PC-9 (cell line): ENCODE measurements at regions of chr4 and their contacts with region 1.

Region 1: GRCh38 chr4:2468445-2469192 is at the start of gene RNF4:
- DNase-seq: peak; percentile 91 to 93
- H3K4me3 ChIP-seq: peak within 1 kb of the TSS; percentile 94
- H3K27ac ChIP-seq: peak within 1 kb of the TSS; percentile 57
- H3K4me1 ChIP-seq: peaks cover 5% of the 10 kb centered on the region
- H3K27me3 ChIP-seq: no peaks in the 10 kb centered on the region
- CTCF ChIP-seq: no peak
- total RNA-seq, gene RNF4: 63.5 and 95.4 TPM in 2 replicates

Region 2: GRCh38 chr4:1883583-1883982 is 585.0 kb before region 1 on chr4:
- CTCF ChIA-PET with region 1: interaction called, 10 read pairs
- POLR2A ChIA-PET with region 1: no interaction called
- intact Hi-C with region 1: no loop called
- DNase-seq: no peak
- H3K4me3 ChIP-seq: no peak overlapping the region
- H3K27ac ChIP-seq: no peak overlapping the region
- H3K4me1 ChIP-seq: no peaks in the 10 kb centered on the region
- H3K27me3 ChIP-seq: no peaks in the 10 kb centered on the region
- CTCF ChIP-seq: no peak

Region 3: GRCh38 chr4:2262143-2262943 is 206.3 kb before region 1 on chr4:
- CTCF ChIA-PET with region 1: no interaction called
- POLR2A ChIA-PET with region 1: no interaction called
- intact Hi-C with region 1: loop called (anchors 5 kb)
- DNase-seq: peak; percentile 95 to 99
- H3K4me3 ChIP-seq: peak overlapping the region; percentile 62
- H3K27ac ChIP-seq: no peak overlapping the region
- H3K4me1 ChIP-seq: peaks cover 9% of the 10 kb centered on the region; the same call in 1 of the 2 replicates
- H3K27me3 ChIP-seq: 0 out of 2 replicates have a peak, but pooled peaks cover 6% of the 10 kb centered on the region
- CTCF ChIP-seq: no peak

Region 4: DNA sequence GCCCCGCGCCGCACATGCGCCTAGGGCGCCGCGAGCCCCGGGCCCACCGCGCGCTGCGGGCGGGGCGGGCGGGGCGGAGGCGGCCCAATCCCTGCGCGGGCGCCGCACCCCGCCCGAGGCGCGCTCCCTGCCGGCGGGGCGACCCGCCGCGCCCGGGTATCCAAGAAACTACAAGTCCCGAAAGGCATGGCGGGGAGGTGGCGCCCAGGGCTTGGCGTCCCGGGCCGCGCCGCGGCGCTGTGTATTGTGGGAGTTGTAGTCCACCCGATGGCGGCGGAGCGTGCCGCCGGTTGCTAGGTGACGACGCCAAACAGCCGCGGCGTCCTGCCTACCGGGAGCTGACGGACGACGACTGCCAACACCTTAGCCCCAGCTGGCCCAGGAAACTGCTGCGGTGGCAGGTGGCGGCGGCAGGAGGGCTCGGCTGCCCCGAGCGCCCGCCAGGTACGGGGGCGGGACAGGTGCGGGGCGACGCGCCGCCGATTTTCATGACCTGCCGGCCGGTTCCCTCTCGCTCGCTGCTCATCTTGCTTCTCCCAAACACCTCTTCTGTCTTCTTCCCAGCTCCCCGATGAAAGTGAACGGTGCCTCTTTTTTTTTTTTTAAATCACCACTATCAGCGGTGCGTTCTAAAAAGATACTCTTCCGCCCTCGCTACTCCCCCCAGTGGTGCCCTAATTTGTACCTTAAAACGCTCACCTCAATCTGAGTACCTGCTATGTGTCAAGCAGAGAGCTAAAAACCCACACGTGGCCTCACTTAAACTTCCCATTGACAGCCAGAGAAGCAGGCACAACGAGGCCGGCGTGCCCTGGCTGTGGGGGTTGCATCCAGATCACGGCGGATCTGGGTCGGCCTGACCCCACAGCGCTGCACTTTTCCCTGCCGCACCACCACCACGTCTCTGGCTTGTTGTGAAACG is 49.7 kb before region 1 on chr4 and contains the start of gene CFAP99:
- CTCF ChIA-PET with region 1: no interaction called
- POLR2A ChIA-PET with region 1: no interaction called
- intact Hi-C with region 1: loop called (anchors 10 kb)
- DNase-seq: peak; percentile 86 to 96
- H3K4me3 ChIP-seq: peak within 1 kb of the TSS; percentile 54; the same call in 1 of the 2 replicates
- H3K27ac ChIP-seq: no peak within 1 kb of the TSS
- H3K4me1 ChIP-seq: peaks cover 6% of the 10 kb centered on the region; the same call in 1 of the 2 replicates
- H3K27me3 ChIP-seq: peaks cover 46% of the 10 kb centered on the region
- CTCF ChIP-seq: no peak
- total RNA-seq, gene CFAP99: 0.48 and 0.85 TPM in 2 replicates